ENCODE measurements at regions of chr1 and their contacts with region 1.

Region 1: GRCh38 chr1:201361652-201362504 is 15.6 kb downstream of the TNNT2 start:
- DNase-seq: no peak
- H3K4me3 ChIP-seq: no peak overlapping the region
- H3K27ac ChIP-seq: no peak overlapping the region
- H3K4me1 ChIP-seq: no peaks in the 10 kb centered on the region
- H3K27me3 ChIP-seq: no peaks in the 10 kb centered on the region
- CTCF ChIP-seq: peak; percentile 33 to 75 (median 56)
- POLR2A ChIP-seq: no peak

Region 2: DNA sequence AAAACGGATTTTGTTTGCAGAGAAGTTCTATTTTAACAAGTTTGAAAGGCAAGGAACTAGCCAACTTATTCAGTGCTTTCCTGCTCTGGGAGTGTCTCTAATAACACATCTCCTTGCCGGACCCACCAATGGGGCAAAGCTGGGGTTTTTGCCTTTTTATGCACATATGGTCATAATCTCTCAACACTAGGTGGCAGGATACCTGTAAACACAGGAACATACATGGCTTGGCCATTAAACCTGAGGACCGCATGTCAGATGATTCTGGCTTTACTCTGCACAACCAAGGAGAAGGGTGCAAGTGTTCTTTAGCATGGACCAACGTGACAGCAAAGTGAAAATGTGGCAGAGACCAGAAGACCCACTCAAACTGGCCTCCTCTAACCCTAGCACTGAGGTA is 212.5 kb before region 1 on chr1:
- intact Hi-C with region 1: no loop called
- DNase-seq: no peak
- H3K4me3 ChIP-seq: no peak overlapping the region
- H3K27ac ChIP-seq: no peak overlapping the region
- H3K4me1 ChIP-seq: peaks cover 0 to 7% of the 10 kb centered on the region in 2 donors
- H3K27me3 ChIP-seq: no peaks in the 10 kb centered on the region
- CTCF ChIP-seq: peak in 2 of 4 experiments; percentile 18 to 19
- POLR2A ChIP-seq: no peak

Region 3: DNA sequence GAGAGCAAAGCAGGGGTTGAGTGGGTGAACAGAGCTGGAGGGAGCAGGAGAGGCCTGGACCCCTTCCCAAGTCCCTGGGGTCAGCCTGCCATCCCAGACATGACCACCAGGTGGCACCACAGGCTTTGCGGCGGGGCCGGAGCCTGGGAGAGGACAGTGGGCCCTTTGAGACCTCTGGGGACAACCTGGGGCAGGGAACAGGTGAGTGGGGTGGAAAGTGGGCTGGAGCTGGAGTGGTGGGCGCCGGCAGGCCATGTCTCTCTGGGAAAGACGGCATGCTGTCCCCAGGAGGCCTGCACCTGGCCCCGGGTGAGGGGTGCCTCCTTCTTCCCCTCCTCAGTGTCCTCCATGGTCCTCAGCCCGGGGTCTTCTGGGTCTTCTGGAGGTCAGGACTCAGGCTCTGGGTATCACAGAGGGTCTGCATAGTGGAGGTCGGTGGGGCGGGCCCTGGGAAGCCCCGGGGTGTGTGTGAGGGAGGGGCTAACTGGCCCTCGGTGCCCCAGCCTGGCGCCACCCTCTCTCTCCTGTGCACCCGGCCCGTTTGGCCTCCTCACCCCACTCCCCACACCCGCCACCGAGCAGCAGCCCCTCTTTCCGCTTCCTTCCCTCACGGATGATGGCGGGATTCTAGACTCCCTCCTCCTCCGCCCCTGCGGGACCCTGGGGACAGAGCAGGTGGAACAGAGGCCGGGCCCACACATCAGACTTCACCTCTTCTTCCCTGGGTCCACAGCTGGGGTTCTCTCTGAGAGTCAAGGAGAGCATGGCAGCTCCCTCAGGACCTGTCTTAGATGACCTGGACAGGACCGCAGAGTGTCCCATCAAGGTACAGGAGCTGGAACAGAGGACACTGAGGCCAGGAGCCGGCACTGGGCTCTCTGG is 107.0 kb before region 1 on chr1:
- intact Hi-C with region 1: loop called (anchors 10 kb)
- DNase-seq: peak in 1 of 2 donors; percentile 52
- H3K4me3 ChIP-seq: no peak overlapping the region
- H3K27ac ChIP-seq: no peak overlapping the region
- H3K4me1 ChIP-seq: no peaks in the 10 kb centered on the region
- H3K27me3 ChIP-seq: no peaks in the 10 kb centered on the region
- CTCF ChIP-seq: peak; percentile 86 to 94 (median 90)
- POLR2A ChIP-seq: no peak

Region 4: GRCh38 chr1:201419746-201420607 is 58.1 kb after region 1 on chr1:
- intact Hi-C with region 1: no loop called
- DNase-seq: no peak
- H3K4me3 ChIP-seq: no peak overlapping the region
- H3K27ac ChIP-seq: no peak overlapping the region
- H3K4me1 ChIP-seq: no peaks in the 10 kb centered on the region
- H3K27me3 ChIP-seq: no peaks in the 10 kb centered on the region
- CTCF ChIP-seq: no peak
- POLR2A ChIP-seq: no peak

Region 5: DNA sequence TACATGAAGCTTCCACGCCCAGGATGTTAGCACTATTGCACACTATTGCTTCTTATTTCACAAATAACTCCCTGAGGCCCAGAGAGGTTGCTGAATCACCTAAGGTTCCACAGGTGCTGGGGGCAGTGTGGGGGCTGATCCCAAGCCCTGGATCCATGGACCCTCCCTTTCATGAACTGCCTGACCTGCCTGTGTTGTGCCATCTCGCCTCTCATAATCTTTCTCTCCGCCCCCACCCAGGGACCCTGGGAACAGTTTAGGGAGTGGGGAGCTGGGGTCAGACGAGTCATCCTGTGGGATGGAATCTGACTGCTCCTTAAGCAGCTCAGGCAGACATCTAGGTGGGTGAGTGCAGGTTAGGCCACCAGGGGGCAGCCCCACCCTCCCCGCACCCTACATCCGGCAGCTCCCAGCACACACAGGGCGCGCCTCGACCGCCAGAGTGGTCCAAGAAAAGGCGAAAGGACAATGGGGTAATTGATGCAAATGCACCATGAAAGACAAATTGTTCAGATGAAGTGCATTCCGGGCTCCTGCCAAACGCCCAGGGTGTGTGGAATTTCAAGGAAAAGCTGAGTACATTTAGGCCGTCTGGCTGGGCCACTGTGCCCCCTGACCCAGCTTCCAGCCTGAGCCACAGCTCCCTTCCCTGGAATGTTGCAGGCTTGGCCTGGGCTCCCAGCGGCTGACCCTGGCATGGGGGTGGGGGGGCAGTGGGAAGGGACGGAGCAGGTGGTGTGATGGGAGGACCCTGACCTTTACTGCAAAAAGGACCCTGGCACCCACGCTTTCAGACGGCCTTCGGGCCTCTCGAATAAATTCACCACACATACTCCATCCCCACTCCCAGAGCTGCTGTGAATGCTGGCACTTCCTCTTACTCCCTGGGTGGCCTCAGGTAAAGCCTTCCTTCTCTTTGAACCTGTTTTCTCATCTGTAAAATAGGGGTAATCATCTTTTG is 86.3 kb after region 1 on chr1:
- intact Hi-C with region 1: no loop called
- DNase-seq: peak; percentile 81 to 85
- H3K4me3 ChIP-seq: no peak overlapping the region
- H3K27ac ChIP-seq: peak overlapping the region; percentile 23 to 24
- H3K4me1 ChIP-seq: peaks cover 3 to 10% of the 10 kb centered on the region in 2 donors
- H3K27me3 ChIP-seq: no peaks in the 10 kb centered on the region
- CTCF ChIP-seq: peak; percentile 86 to 93 (median 89)
- POLR2A ChIP-seq: no peak